Vagina (tissue), 2 donors: ENCODE measurements at regions of chr11 and their contacts with region 1.

Region 1: DNA sequence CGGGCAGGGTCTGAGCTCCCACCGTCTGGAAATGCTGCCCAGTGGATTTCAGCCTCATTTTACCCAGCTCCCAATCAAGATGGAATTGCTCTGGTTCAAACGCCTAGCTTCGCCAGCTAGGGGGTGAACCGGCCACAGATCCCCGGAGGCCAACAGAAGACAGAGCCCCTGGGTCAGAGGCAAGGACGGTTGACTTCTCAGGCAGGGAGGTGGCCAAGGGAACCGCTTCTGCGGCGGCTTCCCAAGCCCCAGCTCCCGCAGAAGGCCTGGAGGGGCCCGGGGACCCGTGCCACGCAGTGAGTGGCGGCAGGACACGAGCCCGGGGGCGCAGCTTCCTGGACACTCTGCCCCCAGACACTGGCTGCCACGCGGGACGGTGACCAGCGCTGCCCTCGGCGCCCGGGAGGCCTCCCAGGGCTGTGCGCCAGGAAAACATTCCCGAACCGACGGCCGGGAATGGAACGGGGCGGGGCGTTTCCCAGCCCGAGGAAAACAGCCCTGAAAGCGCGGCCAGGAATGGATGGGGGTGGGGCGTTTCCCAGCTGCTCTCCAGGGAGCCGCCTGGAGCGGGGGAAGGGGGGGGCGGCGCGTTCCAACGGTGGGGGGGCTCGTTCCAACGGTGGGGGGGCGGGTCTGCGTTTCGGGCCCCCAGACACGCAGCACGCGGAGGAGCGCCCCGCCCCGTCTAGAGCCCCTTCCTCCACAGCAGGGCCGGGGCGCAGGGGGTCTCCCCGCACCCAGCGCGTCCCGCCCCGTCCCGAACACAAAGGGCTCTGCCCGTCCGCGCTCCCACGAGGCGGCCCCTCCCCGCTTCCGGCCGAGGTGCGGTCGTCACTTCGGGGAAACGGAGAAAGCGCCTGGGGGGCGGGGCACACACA is 13.5 kb upstream of the B4GALNT4 start:
- DNase-seq: peak in 1 of 2 donors; percentile 96
- H3K4me3 ChIP-seq: peak overlapping the region; percentile 42 to 50
- H3K27ac ChIP-seq: peak overlapping the region; percentile 100
- H3K4me1 ChIP-seq: peaks cover 40% of the 10 kb centered on the region
- H3K27me3 ChIP-seq: no peaks in the 10 kb centered on the region
- CTCF ChIP-seq: no peak
- POLR2A ChIP-seq: peak in 1 of 2 donors; percentile 51

Region 2: DNA sequence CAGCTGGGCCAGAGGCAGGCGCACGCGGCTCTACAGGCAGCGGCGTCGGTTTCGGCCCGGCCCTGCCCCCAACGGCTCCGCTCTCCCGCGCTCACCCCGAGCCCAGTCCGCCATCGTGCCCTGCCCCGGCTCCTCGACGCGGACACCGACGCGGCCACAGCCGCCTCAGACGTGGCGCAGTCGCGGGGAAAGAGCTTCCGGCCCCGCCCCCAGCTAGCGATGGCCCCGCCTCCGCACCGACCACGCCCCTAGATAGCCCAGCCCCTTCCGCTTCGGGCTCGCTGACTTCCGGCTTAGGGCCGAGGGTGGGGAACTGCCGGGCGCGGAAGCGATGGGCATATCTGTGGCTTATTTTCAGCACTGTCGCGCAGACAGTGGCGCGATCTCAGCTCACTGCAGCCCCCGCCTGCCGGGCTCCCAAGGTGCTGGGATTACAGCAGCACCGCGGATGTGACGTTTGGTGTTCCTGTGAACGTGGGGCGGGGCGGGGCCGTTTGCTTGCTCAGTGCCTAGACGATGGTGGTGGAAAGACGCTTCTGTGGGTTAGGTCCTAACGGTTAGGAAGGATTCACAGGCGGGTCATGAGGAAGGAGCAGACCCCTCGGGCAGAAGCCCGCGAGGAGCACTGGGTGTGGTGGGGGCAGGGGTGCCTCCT is 148.5 kb before region 1 on chr11 and contains the starts of genes BET1L and RIC8A:
- intact Hi-C with region 1: loop called (anchors 5 kb)
- DNase-seq: peak in 1 of 2 donors; percentile 98
- H3K4me3 ChIP-seq: peak within 1 kb of the TSS; percentile 81 to 96
- H3K27ac ChIP-seq: peak within 1 kb of the TSS; percentile 97
- H3K4me1 ChIP-seq: peaks cover 61% of the 10 kb centered on the region
- H3K27me3 ChIP-seq: no peaks in the 10 kb centered on the region
- CTCF ChIP-seq: peak in 1 of 3 experiments; percentile 15
- POLR2A ChIP-seq: peak in 1 of 2 donors; percentile 87
- total RNA-seq, gene BET1L: 26.5 TPM
- total RNA-seq, gene RIC8A: 90.1 TPM

Region 3: GRCh38 chr11:225734-226453 is 129.9 kb before region 1 on chr11:
- intact Hi-C with region 1: no loop called
- DNase-seq: peak in 1 of 2 donors; percentile 56
- H3K4me3 ChIP-seq: no peak overlapping the region
- H3K27ac ChIP-seq: no peak overlapping the region
- H3K4me1 ChIP-seq: no peaks in the 10 kb centered on the region
- H3K27me3 ChIP-seq: no peaks in the 10 kb centered on the region
- CTCF ChIP-seq: no peak
- POLR2A ChIP-seq: no peak

Region 4: GRCh38 chr11:304915-305843 is 50.6 kb before region 1 on chr11:
- intact Hi-C with region 1: loop called (anchors 5 kb)
- DNase-seq: no peak
- H3K4me3 ChIP-seq: no peak overlapping the region
- H3K27ac ChIP-seq: peak overlapping the region; percentile 52
- H3K4me1 ChIP-seq: peaks cover 22% of the 10 kb centered on the region
- H3K27me3 ChIP-seq: no peaks in the 10 kb centered on the region
- CTCF ChIP-seq: peak; percentile 30 to 67 (median 57)
- POLR2A ChIP-seq: no peak

Region 5: GRCh38 chr11:326842-327580 is 28.8 kb before region 1 on chr11:
- intact Hi-C with region 1: loop called (anchors 2 kb)
- DNase-seq: no peak
- H3K4me3 ChIP-seq: peak overlapping the region; percentile 0 to 9
- H3K27ac ChIP-seq: peak overlapping the region; percentile 93
- H3K4me1 ChIP-seq: peaks cover 40% of the 10 kb centered on the region
- H3K27me3 ChIP-seq: no peaks in the 10 kb centered on the region
- CTCF ChIP-seq: no peak
- POLR2A ChIP-seq: no peak

Region 6: DNA sequence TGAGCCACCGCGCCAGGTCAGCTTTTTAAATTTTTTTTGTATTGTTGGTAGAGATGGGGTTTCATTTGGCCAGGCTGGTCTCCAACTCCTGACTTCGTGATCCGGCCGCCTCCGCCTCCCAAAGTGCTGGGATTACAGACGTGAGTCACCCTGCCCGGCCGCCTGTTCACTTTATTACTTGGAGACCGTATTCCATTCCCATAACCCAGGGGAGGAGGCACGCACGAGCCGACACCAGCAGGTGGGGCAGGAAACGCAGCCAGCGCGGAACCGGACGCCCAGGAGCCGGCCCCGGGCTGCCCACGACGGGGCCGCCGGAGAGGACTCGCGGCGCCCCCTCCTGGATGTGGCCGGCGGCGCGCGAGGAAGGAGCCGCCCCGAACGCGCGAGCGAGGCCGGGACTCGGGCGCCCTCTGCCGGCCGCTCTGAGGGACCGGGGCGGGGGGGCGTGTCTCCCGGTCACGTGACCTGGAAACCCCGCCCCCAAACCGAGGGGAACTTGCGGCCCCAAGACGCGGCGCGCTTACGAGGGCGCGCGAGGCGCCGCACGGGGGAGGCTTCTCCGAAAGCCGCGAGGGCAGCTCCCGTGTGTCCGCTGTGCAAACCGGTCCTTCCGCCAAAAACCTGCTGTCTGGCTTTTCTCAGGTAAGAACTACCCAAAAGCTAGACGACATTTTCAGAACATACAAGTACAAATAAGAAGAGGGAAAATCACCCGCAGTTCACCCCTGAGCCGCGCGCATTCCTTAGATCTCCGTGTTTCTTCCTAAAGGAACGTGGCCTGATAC is 162.8 kb after region 1 on chr11:
- intact Hi-C with region 1: loop called (anchors 5 kb)
- DNase-seq: peak in 1 of 2 donors; percentile 96
- H3K4me3 ChIP-seq: peak overlapping the region; percentile 24 to 37
- H3K27ac ChIP-seq: peak overlapping the region; percentile 89
- H3K4me1 ChIP-seq: peaks cover 7% of the 10 kb centered on the region
- H3K27me3 ChIP-seq: no peaks in the 10 kb centered on the region
- CTCF ChIP-seq: peak; percentile 98 to 99 (median 99)
- POLR2A ChIP-seq: no peak